PC-3 (cell line): ENCODE measurements at regions of chr6 and their contacts with region 1.

Region 1: GRCh38 chr6:31815025-31815838 is at the starts of genes HSPA1A and HSPA1L:
- DNase-seq: peak; percentile 98
- ATAC-seq: peak; percentile 76
- H3K4me3 ChIP-seq: peak within 1 kb of the TSS; percentile 87
- H3K27ac ChIP-seq: peak within 1 kb of the TSS; percentile 84
- H3K4me1 ChIP-seq: peaks cover 22% of the 10 kb centered on the region
- H3K27me3 ChIP-seq: no peaks in the 10 kb centered on the region
- CTCF ChIP-seq: no peak
- total RNA-seq, gene HSPA1A: 269 and 324 TPM in 2 replicates
- total RNA-seq, gene HSPA1L: 0.26 and 0.69 TPM in 2 replicates

Region 2: GRCh38 chr6:31739639-31740396 is 75.4 kb before region 1 on chr6 and contains the start of gene MSH5:
- CTCF ChIA-PET with region 1: no interaction called
- POLR2A ChIA-PET with region 1: no interaction called
- intact Hi-C with region 1: loop called (anchors 5 kb)
- DNase-seq: peak; percentile 99
- ATAC-seq: peak; percentile 77
- H3K4me3 ChIP-seq: peak within 1 kb of the TSS; percentile 79
- H3K27ac ChIP-seq: peak within 1 kb of the TSS; percentile 87
- H3K4me1 ChIP-seq: peaks cover 42% of the 10 kb centered on the region
- H3K27me3 ChIP-seq: no peaks in the 10 kb centered on the region
- CTCF ChIP-seq: no peak
- total RNA-seq, gene MSH5: 22.7 and 23.0 TPM in 2 replicates

Region 3: DNA sequence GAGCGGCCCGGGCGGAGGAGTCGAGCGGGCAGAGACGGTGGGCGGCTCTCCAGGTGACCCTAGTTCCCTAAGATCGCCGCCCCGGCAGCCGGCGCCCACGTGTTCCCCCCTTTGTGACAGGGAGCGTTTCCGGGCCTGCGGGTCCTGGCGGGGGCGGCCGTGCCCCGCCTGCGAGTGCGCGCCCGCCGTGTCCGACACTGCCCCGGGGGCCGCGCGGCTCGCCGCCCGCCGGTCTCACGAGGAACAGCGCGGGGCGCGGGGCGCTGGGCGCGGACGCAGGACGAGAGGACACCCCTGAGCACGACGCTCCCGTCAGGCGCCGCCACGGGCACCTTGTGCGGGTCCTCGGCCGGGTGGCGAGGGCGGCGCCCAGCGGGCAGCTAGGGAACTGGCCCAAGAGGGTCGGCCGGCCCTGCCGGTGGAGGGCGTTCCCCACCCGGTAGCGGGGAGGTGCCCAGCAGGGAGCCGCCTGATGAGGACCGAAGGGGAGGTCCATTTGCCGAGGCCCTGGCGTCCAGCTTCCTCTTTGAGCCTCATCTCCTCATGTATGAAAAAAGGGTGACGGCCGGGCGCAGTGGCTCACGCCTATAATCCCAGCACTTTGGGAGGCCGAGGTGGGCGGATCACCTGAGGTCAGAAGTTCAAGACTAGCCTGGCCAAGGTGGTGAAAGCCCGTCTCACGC is 19.5 kb before region 1 on chr6 and contains the start of gene VARS1:
- CTCF ChIA-PET with region 1: interaction called, 4 read pairs
- POLR2A ChIA-PET with region 1: interaction called, 11 read pairs
- intact Hi-C with region 1: loop called (anchors 2 kb)
- DNase-seq: peak; percentile 90
- ATAC-seq: peak; percentile 74
- H3K4me3 ChIP-seq: peak within 1 kb of the TSS; percentile 87
- H3K27ac ChIP-seq: peak within 1 kb of the TSS; percentile 84
- H3K4me1 ChIP-seq: peaks cover 24% of the 10 kb centered on the region
- H3K27me3 ChIP-seq: no peaks in the 10 kb centered on the region
- CTCF ChIP-seq: peak; percentile 70
- total RNA-seq, gene VARS1: 89.8 and 130 TPM in 2 replicates

Region 4: DNA sequence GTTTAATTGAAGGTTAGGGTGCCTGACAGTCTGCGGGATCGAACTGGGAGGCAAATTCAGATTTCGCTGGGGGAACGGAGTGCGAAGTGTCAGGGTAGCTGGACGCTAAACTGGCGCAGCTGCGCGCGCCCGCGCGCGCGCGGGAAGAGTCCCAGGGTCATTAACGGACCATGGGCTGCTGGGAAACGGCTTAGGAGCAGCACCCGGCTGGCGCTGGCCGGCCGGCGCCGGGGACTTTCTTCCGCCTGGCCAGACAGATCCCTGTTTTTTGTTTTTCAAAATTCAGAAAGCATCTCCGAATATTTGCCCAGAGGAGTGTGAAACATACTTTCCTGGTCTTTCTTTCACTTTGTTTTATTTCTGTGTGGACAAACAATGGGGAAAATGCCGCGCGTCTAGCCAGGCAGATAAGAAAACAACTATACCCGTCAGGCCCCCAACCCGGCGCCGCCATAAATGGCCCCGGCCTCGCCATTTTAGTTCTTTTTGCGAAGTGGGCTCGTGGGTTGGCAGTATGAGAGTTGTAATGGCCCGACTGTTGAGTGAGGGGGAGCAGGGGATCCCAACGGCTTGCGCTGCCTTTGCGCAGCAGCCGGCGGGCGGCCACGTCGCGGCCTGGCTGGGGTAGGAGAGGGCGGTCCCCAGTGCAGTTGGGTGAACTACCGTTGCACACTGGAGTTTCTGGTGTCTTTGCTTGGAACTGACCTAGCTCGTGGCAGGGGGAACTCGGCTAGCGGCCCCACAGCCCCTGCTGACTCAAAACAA is 19.4 kb after region 1 on chr6:
- CTCF ChIA-PET with region 1: interaction called, 4 read pairs
- POLR2A ChIA-PET with region 1: interaction called, 17 read pairs
- intact Hi-C with region 1: loop called (anchors 2 kb)
- DNase-seq: peak; percentile 85
- ATAC-seq: peak; percentile 75
- H3K4me3 ChIP-seq: peak overlapping the region; percentile 97
- H3K27ac ChIP-seq: peak overlapping the region; percentile 79
- H3K4me1 ChIP-seq: peaks cover 26% of the 10 kb centered on the region
- H3K27me3 ChIP-seq: no peaks in the 10 kb centered on the region
- CTCF ChIP-seq: no peak

Region 5: DNA sequence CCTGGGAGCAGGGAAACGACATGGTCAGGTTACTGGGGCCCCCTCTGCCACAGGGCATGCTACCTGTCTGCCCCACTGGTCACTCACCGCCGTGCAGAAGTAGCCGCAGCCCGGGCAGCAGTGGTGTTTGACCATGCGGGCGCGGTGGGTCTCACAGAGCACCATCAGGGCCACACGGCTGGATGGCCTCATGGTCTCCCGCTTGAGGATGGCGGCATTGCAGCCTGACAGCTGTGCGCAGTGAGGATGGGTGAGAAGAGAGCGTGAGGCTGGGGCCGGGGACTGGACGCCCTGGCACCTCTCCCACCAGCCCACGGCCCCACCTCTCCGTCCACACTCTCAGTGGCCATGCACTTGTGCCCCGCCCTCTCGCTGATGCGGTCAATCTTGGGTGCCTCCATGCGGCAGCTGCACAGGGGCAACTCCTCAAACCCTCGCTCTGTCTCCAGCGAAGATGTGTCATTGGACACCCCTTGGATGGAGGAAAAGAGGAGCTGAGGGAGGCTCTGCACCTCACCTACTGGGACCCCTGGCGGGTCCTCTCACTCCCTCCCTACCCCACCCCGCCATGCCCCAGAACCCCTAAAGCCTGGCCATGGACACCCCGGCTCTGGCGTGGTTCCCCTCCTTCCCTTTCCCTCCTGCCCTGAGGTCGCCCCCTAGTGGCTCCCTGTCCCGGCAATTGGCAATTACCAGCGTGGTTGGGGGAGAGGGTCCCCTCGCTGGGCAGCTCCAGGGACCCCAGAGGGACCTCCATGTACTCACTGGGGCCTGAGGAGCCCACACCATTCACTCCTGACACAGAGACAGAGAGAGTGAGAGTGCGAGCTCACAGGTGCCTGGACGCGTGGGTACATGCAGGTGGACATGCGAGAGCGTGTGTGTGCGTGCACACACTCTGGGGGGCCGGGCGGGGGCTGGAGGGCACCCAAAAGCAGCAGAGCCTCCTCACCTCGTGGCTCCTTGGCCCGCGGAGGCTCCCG is 73.3 kb after region 1 on chr6:
- CTCF ChIA-PET with region 1: no interaction called
- POLR2A ChIA-PET with region 1: no interaction called
- intact Hi-C with region 1: no loop called
- DNase-seq: peak; percentile 40
- ATAC-seq: no peak
- H3K4me3 ChIP-seq: no peak overlapping the region
- H3K27ac ChIP-seq: no peak overlapping the region
- H3K4me1 ChIP-seq: peaks cover 11% of the 10 kb centered on the region
- H3K27me3 ChIP-seq: no peaks in the 10 kb centered on the region
- CTCF ChIP-seq: peak; percentile 90

Region 6: DNA sequence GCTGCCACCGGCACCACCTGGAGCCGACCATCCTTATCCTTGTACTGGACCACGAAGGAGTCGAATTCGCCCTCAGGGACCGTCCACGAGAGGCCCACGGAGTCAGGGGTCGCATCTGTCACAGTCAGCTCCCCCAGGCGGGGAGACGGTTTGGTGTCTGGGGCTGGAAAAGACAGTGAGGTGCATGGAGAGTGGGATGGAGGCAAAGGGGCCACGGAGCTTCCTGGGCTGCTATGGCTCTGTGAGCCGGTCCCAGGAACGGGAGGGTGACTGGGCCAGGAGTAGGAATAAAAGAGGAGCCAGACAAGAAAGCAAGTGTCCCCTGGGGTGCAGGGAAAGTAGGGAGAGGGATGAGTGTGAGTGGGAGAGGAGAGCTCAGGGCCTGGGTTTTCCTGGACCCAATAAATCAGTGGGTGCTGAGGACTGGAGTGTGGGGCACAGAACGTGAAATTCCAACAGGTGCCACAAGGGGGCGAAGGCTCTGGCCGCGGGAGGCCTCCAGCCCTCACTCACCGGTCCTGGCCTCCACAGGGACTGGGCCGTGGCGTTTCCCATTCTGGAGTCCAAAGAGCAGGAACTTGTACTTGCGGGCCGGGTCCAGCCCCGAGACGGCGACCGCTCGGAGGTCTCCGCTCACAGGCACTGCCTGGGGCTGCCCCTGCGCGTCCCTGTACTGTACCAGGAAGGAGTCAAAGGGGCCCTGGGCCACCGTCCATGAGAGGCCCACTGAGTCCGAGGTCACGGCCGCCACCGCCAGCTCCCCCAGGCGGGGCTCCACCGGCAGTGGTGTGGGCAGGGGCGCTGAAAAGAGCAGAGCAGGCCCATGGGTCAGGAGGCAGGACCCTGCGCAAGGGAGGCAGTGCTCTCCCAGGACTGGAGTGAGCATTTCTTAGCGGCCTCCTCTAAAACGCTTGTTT is 232.9 kb after region 1 on chr6:
- CTCF ChIA-PET with region 1: no interaction called
- POLR2A ChIA-PET with region 1: no interaction called
- intact Hi-C with region 1: no loop called
- DNase-seq: peak; percentile 73
- ATAC-seq: peak; percentile 69
- H3K4me3 ChIP-seq: no peak overlapping the region
- H3K27ac ChIP-seq: peak overlapping the region; percentile 49; the same call in 1 of the 2 replicates
- H3K4me1 ChIP-seq: peaks cover 20% of the 10 kb centered on the region
- H3K27me3 ChIP-seq: no peaks in the 10 kb centered on the region
- CTCF ChIP-seq: peak; percentile 75

Region 7: GRCh38 chr6:32952817-32953739 is 1137.8 kb after region 1 on chr6 and contains the start of gene HLA-DMA:
- CTCF ChIA-PET with region 1: no interaction called
- POLR2A ChIA-PET with region 1: interaction called, 14 read pairs
- intact Hi-C with region 1: no loop called
- DNase-seq: peak; percentile 96
- ATAC-seq: peak; percentile 97
- H3K4me3 ChIP-seq: no peak within 1 kb of the TSS
- H3K27ac ChIP-seq: no peak within 1 kb of the TSS
- H3K4me1 ChIP-seq: no peaks in the 10 kb centered on the region; the same call in 1 of the 2 replicates
- H3K27me3 ChIP-seq: no peaks in the 10 kb centered on the region
- CTCF ChIP-seq: peak; percentile 79
- total RNA-seq, gene HLA-DMA: 1.7 and 3.0 TPM in 2 replicates